Caco-2 (cell line): ENCODE measurements at regions of chr13 and their contacts with region 1.

Region 1: DNA sequence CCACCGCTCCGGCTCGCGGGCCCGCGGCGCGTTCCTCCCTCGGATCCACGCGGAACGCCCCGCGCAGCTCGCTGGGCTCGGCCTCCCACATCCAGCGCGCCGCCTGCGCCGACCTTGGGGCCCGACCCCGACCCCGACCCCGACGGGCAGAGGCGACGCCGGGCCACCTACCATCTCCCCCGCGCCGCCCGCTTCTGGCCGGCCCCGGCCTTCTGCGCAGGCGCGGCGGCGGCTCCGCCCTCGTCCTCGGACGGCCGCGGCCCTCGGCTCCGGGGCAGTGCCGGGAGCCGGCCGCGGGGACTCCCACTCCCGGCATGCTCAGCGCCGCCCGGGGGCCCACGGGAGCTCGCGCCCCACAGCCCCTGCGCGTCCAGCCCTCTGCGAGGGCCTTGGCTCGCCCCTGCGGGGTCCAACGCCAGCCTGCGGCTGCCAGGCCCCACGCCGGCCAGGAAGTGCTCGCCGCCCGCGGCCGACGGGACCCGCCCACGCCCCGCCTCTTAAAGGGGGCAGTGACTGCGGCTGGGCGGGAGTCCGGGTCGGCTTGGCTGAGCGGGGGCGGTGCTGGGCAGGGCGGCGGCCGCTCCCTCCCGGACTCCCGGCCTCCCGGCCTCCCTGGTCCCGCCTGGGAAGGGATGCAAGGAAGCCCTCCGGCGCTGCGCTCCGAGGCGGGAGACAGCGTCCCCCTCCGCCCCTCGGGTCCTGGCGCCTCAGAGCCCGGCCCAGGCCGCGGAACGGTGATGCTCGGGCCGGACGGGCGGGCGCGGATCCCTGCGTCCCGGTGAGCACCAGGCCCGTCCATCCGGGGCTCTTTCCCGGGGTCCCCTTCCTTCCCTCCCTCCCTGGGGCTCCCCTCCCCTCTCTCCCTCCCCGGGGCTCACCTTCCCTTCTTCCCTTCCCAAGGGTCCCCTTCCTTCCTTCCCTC is at the start of gene DCUN1D2:
- DNase-seq: peak; percentile 95 to 98
- H3K4me3 ChIP-seq: peak within 1 kb of the TSS; percentile 73
- H3K4me3 Mint-ChIP-seq: peak within 1 kb of the TSS; percentile 90
- H3K27ac Mint-ChIP-seq: peak within 1 kb of the TSS; percentile 74
- H3K4me1 ChIP-seq: peaks cover 37% of the 10 kb centered on the region
- H3K4me1 Mint-ChIP-seq: peaks cover 41% of the 10 kb centered on the region
- H3K27me3 ChIP-seq: no peaks in the 10 kb centered on the region
- H3K27me3 Mint-ChIP-seq: no peaks in the 10 kb centered on the region
- CTCF ChIP-seq: no peak
- total RNA-seq, gene DCUN1D2: 59.4 and 59.9 TPM in 2 replicates

Region 2: DNA sequence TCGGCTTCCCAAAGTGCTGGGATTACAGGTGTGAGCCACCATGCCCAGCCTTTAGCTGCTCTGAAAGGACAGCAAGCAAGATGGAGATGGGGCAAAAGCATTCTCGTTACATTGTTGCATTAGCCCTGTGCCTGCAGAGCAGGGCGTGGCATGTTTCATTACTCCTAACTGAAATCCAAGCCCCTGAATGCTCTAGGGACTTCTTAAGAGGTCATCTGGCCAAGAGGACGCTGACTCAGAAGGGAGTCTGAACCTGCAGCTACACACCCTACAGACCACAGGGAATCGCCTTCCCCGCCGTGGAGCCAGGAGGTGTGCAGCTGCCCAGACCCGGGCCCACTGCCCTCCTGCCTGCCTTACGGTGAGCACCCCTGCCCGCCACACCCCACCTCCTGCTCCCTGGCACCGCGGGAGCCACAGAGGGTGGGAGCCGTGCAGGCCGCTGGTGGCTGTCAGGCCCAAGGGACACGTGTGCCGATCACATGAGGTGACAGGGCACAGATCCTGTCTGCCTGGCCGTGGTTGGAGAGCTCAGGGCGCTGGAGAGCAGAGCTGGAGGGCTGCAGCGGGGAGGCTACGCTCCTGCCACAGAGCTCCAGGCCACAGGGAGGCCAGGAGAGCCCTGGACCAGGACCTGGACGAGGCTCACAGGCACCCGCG is 64.7 kb before region 1 on chr13:
- CTCF ChIA-PET with region 1: no interaction called
- POLR2A ChIA-PET with region 1: no interaction called
- intact Hi-C with region 1: no loop called
- DNase-seq: no peak
- H3K4me3 ChIP-seq: no peak overlapping the region
- H3K4me3 Mint-ChIP-seq: no peak overlapping the region
- H3K27ac Mint-ChIP-seq: no peak overlapping the region
- H3K4me1 ChIP-seq: peaks cover 10% of the 10 kb centered on the region
- H3K4me1 Mint-ChIP-seq: no peaks in the 10 kb centered on the region
- H3K27me3 ChIP-seq: no peaks in the 10 kb centered on the region
- H3K27me3 Mint-ChIP-seq: no peaks in the 10 kb centered on the region
- CTCF ChIP-seq: no peak

Region 3: GRCh38 chr13:113445791-113446487 is 44.8 kb before region 1 on chr13:
- CTCF ChIA-PET with region 1: no interaction called
- POLR2A ChIA-PET with region 1: no interaction called
- intact Hi-C with region 1: no loop called
- DNase-seq: no peak
- H3K4me3 ChIP-seq: no peak overlapping the region
- H3K4me3 Mint-ChIP-seq: no peak overlapping the region
- H3K27ac Mint-ChIP-seq: no peak overlapping the region
- H3K4me1 ChIP-seq: peaks cover 9% of the 10 kb centered on the region
- H3K4me1 Mint-ChIP-seq: peaks cover 6% of the 10 kb centered on the region
- H3K27me3 ChIP-seq: no peaks in the 10 kb centered on the region
- H3K27me3 Mint-ChIP-seq: no peaks in the 10 kb centered on the region
- CTCF ChIP-seq: no peak

Region 4: DNA sequence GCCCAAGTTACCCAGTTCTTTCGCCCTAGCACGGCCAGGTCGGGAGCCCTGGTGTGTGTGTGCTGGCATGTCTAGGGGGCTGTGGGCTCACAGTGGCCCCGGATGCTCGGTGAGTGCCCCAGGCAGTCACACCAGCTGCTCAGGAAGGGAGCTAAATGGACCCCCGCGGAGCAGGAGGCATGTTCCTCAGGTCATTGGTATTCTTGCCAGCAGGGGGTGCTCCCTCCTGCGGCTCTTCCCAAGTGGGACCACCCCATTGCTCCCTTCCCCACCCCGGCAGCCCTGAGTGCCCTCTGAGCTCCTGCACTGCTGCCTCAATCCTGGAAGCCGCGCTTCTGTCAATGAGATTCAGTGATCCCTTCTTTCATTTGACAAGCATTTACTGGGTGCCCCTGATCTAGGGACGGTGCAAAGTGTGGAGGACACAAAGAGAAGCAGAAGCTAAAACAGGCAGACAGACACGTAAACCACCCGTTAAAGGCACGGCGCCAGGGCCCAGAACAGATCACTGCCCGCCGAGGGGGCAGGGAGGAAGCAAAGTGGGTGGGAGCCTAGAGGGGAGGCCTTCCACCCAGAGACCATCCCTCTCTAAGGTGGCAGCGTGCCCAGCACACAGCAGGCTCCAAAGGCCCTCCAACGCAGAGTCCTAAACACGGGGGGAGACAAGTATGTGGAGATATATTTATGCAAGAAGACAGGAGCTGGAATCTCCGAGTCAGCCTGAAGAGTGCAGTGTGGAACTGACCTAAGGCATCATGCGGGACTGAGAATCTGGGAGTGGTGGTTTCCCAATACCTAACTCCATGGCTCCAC is 32.3 kb before region 1 on chr13:
- CTCF ChIA-PET with region 1: interaction called, 10 read pairs
- POLR2A ChIA-PET with region 1: interaction called, 4 read pairs
- intact Hi-C with region 1: no loop called
- DNase-seq: no peak
- H3K4me3 ChIP-seq: no peak overlapping the region
- H3K4me3 Mint-ChIP-seq: no peak overlapping the region
- H3K27ac Mint-ChIP-seq: no peak overlapping the region
- H3K4me1 ChIP-seq: 0 out of 2 replicates have a peak, but pooled peaks cover 3% of the 10 kb centered on the region
- H3K4me1 Mint-ChIP-seq: no peaks in the 10 kb centered on the region
- H3K27me3 ChIP-seq: no peaks in the 10 kb centered on the region
- H3K27me3 Mint-ChIP-seq: no peaks in the 10 kb centered on the region
- CTCF ChIP-seq: peak; percentile 41 to 59

Region 5: GRCh38 chr13:113562085-113562749 is 71.5 kb after region 1 on chr13:
- CTCF ChIA-PET with region 1: interaction called, 10 read pairs
- POLR2A ChIA-PET with region 1: no interaction called
- intact Hi-C with region 1: loop called (anchors 2 kb)
- DNase-seq: peak; percentile 73 to 75
- H3K4me3 ChIP-seq: no peak overlapping the region
- H3K4me3 Mint-ChIP-seq: no peak overlapping the region
- H3K27ac Mint-ChIP-seq: no peak overlapping the region
- H3K4me1 ChIP-seq: no peaks in the 10 kb centered on the region; the same call in 1 of the 2 replicates
- H3K4me1 Mint-ChIP-seq: no peaks in the 10 kb centered on the region
- H3K27me3 ChIP-seq: no peaks in the 10 kb centered on the region
- H3K27me3 Mint-ChIP-seq: peaks cover 11% of the 10 kb centered on the region
- CTCF ChIP-seq: peak; percentile 63 to 89

Region 6: DNA sequence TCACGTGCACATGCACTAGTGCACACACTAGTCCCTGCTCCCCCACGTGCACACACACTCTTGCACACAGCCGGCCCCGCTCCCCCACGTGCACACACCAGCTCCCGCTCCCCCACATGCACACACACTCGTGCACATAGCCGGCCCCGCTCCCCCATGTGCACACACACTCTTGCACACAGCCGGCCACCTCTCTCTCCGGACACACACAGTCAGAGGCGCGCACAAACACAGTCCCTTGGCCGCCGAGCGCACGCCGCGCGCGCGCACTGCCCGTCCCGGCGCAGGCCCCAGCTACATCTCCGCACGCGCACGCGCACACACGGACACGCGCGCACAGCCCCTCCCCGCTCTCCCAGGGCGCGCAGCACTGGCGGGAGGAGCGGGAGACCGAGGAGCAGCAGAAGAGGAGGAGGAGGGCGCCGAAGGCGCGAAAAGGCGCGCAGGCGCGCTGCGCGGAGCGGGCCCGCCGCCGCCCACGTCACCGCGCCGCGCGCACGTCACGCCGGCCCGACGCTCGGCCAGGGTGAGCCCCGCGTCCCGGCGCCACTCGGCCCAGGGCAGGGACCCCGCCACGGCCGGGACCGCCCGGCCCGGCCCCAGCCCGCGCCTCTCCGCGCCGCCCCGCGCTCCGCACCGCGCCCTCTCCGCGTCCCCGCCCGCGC is 93.6 kb after region 1 on chr13 and contains the start of gene TFDP1:
- CTCF ChIA-PET with region 1: no interaction called
- POLR2A ChIA-PET with region 1: interaction called, 6 read pairs
- intact Hi-C with region 1: loop called (anchors 1 kb)
- DNase-seq: peak; percentile 94
- H3K4me3 ChIP-seq: peak within 1 kb of the TSS; percentile 77
- H3K4me3 Mint-ChIP-seq: peak within 1 kb of the TSS; percentile 94
- H3K27ac Mint-ChIP-seq: peak within 1 kb of the TSS; percentile 81
- H3K4me1 ChIP-seq: peaks cover 22% of the 10 kb centered on the region
- H3K4me1 Mint-ChIP-seq: peaks cover 19% of the 10 kb centered on the region
- H3K27me3 ChIP-seq: no peaks in the 10 kb centered on the region
- H3K27me3 Mint-ChIP-seq: no peaks in the 10 kb centered on the region
- CTCF ChIP-seq: no peak
- total RNA-seq, gene TFDP1: 136 and 140 TPM in 2 replicates